ENCODE measurements at regions of chr2 and their contacts with region 1.

Region 1: DNA sequence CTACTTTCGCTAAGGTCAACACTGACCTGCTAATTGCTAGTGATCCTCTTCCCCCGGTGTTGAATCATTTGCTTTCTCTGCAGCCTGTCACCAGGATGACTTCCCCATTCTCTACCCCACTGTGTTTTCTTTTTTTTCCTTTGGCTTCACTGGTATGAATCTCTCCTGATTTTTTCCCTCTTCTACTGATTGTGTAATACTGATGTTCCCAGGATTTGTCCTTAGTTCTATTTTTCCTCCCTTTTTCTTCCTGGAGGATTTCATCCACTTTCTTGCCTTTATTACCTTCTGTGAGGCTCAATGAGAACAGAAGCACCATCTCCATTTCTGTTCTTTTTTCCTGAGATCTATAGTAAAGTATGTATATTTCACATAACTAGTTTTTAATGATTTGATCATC is 14.1 kb upstream of the MSH2 start:
- H3K4me3 Mint-ChIP-seq: no peak overlapping the region
- H3K27ac Mint-ChIP-seq: no peak overlapping the region
- H3K4me1 Mint-ChIP-seq: peaks cover 20% of the 10 kb centered on the region
- H3K27me3 Mint-ChIP-seq: peaks cover 10% of the 10 kb centered on the region

Region 2: DNA sequence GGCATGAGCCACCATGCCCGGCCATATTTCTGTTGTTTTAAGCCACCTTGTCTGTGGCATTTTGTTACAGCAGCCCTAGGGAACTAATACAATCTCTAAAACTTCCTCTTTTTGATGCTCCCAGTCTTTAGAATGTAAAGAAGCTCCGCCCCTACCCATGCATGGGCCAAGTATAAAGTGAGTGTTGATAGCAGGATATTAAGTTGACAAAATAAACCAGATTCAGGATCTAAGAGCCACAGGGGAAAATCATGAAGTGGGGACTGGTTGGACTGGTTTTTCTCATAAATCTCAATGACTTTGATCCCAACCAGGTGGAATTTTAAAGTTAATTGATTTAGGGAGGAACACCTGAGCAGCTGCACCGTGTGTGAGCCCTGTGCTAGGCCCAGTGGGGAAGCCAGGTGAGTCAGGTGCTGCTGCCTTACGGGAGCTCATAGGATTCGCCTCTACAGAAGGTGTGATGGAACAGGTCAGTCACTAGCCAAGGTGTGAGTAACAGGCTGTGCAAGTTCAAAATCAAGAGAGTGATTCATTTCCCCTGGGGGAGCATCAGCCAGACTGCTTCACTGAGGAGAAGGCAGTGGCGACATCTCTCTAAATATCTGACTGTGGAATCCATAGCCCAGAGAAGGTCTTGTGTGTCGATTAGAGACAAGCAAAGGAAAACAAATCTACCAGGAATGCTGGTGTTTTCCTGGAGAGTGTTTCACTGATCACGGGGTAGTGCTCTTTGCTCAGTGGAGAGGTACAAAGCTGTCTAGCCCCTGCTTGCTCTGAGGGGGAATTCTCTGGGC is 48.9 kb before region 1 on chr2:
- intact Hi-C with region 1: loop called (anchors 1 kb)
- H3K4me3 Mint-ChIP-seq: no peak overlapping the region
- H3K27ac Mint-ChIP-seq: no peak overlapping the region
- H3K4me1 Mint-ChIP-seq: peaks cover 24% of the 10 kb centered on the region
- H3K27me3 Mint-ChIP-seq: peaks cover 12% of the 10 kb centered on the region

Measured in dendritic cell treated with granulocyte-macrophage colony-stimulating factor and Interleukin-4, amounts not matched to agents 40 ng/mL and 50 ng/mL, for 4 days (primary cell).